Left ventricle myocardium superior (tissue), 1 donor: ENCODE measurements at regions of chr9 and their contacts with region 1.

Region 1: GRCh38 chr9:34546834-34547827 is 24.3 kb upstream of the ENHO start:
- DNase-seq: peak; percentile 70
- ATAC-seq: peak; percentile 80

Region 2: DNA sequence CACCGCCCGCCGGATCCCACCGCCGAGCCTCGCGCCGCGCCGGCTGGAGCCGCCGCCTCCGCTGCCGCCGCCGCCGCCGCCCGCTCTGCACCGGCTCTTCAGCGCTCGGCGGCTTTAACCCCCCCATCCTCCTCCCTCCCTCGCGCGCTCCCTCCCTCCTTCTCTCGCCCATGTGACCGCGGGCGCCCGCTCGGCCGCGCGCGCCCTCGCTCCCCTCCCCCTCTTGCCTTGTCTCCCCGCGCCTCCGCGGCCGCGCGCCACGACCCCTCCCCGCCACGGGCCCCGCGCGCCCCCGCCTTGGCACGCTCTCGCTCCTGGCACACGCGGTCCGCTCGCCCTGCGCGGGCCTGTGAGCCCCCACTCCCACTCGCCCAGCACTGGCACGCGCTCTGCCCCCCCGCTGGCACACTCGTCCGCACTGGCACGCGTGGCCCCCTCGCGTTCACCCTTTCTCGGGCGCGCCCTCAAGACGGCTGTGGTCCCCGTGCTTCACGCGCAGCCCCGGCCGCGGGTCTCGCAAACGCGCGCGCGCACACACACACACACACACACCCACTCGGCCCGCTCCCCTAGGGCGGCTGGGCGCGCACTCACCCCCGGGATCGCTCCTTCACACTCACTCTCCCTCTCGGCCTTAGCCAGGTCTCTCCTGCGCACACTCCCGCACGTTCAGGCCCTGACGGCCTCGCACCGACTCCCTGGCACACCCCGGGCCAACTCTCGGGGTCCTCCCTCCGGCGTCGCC is 42.7 kb after region 1 on chr9 and contains the start of gene CNTFR:
- intact Hi-C with region 1: loop called (anchors 5 kb)
- DNase-seq: peak; percentile 64
- ATAC-seq: peak; percentile 24
- total RNA-seq, gene CNTFR: 3.3 TPM